Activated CD4-positive, alpha-beta memory T cell treated with anti-CD3 and anti-CD28 coated beads for 36 hours (primary cell): ENCODE measurements at regions of chr6 and their contacts with region 1.

Region 1: GRCh38 chr6:131914967-131915751 is 36.0 kb downstream of the CCN2 start:
- DNase-seq: peak; percentile 61
- H3K4me3 Mint-ChIP-seq: no peak overlapping the region
- H3K27ac Mint-ChIP-seq: no peak overlapping the region
- H3K4me1 Mint-ChIP-seq: peaks cover 13% of the 10 kb centered on the region
- H3K27me3 Mint-ChIP-seq: peaks cover 43% of the 10 kb centered on the region

Region 2: GRCh38 chr6:131694831-131695426 is 220.2 kb before region 1 on chr6:
- CTCF ChIA-PET with region 1: interaction called, 42 read pairs
- POLR2A ChIA-PET with region 1: no interaction called
- intact Hi-C with region 1: loop called (anchors 1 kb)
- DNase-seq: peak; percentile 45
- H3K4me3 Mint-ChIP-seq: no peak overlapping the region
- H3K27ac Mint-ChIP-seq: no peak overlapping the region
- H3K4me1 Mint-ChIP-seq: no peaks in the 10 kb centered on the region
- H3K27me3 Mint-ChIP-seq: no peaks in the 10 kb centered on the region

Region 3: GRCh38 chr6:132218059-132218696 is 303.0 kb after region 1 on chr6:
- CTCF ChIA-PET with region 1: interaction called, 20 read pairs
- POLR2A ChIA-PET with region 1: no interaction called
- intact Hi-C with region 1: loop called (anchors 1 kb)
- DNase-seq: no peak
- H3K4me3 Mint-ChIP-seq: no peak overlapping the region
- H3K27ac Mint-ChIP-seq: no peak overlapping the region
- H3K4me1 Mint-ChIP-seq: no peaks in the 10 kb centered on the region
- H3K27me3 Mint-ChIP-seq: peaks cover 4% of the 10 kb centered on the region